T-cell (primary cell): ENCODE measurements at regions of chr12 and their contacts with region 1.

Region 1: DNA sequence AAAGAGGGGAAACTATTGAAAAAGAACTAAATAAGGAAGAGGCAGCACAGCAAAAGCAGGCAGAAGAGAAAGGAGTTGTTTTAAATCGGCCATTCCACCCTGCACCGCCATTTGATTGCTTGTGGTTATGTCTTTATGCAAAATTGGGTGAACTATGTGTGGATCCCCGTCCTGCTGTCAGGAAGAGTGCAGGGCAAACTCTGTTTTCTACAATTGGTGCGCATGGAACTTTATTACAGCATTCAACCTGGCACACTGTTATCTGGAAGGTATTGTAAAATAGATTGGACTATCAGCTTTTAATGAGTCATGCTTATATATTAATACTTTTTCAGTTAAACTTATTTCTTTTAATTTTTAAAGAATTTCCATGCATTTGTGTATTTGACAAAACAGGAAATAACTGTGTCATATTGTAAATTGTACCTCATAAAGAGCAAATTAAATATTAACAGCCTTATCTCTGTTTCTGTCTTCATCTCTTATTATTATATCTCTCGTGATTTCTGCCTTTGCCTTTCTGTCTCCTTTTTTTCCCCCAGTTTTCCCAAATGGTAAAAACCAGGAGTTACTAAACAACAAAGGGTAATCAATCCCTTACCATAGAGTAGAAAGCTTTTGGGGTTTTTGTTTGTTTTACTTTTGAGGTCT is 86.4 kb downstream of the MON2 start:
- DNase-seq: no peak
- ATAC-seq: no peak
- H3K4me3 ChIP-seq: no peak overlapping the region
- H3K4me3 Mint-ChIP-seq: no peak overlapping the region
- H3K27ac ChIP-seq: no peak overlapping the region
- H3K27ac Mint-ChIP-seq: no peak overlapping the region
- H3K4me1 ChIP-seq: no peaks in the 10 kb centered on the region
- H3K4me1 Mint-ChIP-seq: no peaks in the 10 kb centered on the region
- H3K27me3 ChIP-seq: no peaks in the 10 kb centered on the region
- H3K27me3 Mint-ChIP-seq: no peaks in the 10 kb centered on the region

Region 2: GRCh38 chr12:62210422-62210821 is 342.6 kb before region 1 on chr12:
- CTCF ChIA-PET with region 1: interaction called in 1 of 2 experiments, 11 read pairs
- POLR2A ChIA-PET with region 1: no interaction called
- DNase-seq: peak in 21 of 35 experiments; percentile 8 to 60 (median 24)
- ATAC-seq: peak in 2 of 4 experiments; percentile 49 to 61
- H3K4me3 ChIP-seq: no peak overlapping the region
- H3K4me3 Mint-ChIP-seq: peak overlapping the region in 1 of 3 donors; percentile 31
- H3K27ac ChIP-seq: no peak overlapping the region
- H3K27ac Mint-ChIP-seq: no peak overlapping the region
- H3K4me1 ChIP-seq: peaks cover 0 to 15% of the 10 kb centered on the region in 2 experiments
- H3K4me1 Mint-ChIP-seq: peaks cover 18 to 27% (median 19%) of the 10 kb centered on the region in 3 donors
- H3K27me3 ChIP-seq: peaks cover 0 to 5% of the 10 kb centered on the region in 2 experiments
- H3K27me3 Mint-ChIP-seq: peaks cover 0 to 5% of the 10 kb centered on the region in 2 donors

Region 3: GRCh38 chr12:62581288-62582064 is 28.4 kb after region 1 on chr12:
- CTCF ChIA-PET with region 1: no interaction called
- POLR2A ChIA-PET with region 1: no interaction called
- DNase-seq: peak in 1 of 35 experiments; percentile 66
- ATAC-seq: peak in 3 of 4 experiments; percentile 50 to 61 (median 52)
- H3K4me3 ChIP-seq: no peak overlapping the region
- H3K4me3 Mint-ChIP-seq: no peak overlapping the region
- H3K27ac ChIP-seq: no peak overlapping the region
- H3K27ac Mint-ChIP-seq: no peak overlapping the region
- H3K4me1 ChIP-seq: no peaks in the 10 kb centered on the region
- H3K4me1 Mint-ChIP-seq: peaks cover 0 to 6% (median 0%) of the 10 kb centered on the region in 3 donors
- H3K27me3 ChIP-seq: no peaks in the 10 kb centered on the region
- H3K27me3 Mint-ChIP-seq: no peaks in the 10 kb centered on the region